ENCODE measurements at regions of chrX and their contacts with region 1.

Region 1: GRCh38 chrX:154051201-154051810 is 31.6 kb upstream of the IRAK1 start:
- DNase-seq: peak; percentile 82

Region 2: DNA sequence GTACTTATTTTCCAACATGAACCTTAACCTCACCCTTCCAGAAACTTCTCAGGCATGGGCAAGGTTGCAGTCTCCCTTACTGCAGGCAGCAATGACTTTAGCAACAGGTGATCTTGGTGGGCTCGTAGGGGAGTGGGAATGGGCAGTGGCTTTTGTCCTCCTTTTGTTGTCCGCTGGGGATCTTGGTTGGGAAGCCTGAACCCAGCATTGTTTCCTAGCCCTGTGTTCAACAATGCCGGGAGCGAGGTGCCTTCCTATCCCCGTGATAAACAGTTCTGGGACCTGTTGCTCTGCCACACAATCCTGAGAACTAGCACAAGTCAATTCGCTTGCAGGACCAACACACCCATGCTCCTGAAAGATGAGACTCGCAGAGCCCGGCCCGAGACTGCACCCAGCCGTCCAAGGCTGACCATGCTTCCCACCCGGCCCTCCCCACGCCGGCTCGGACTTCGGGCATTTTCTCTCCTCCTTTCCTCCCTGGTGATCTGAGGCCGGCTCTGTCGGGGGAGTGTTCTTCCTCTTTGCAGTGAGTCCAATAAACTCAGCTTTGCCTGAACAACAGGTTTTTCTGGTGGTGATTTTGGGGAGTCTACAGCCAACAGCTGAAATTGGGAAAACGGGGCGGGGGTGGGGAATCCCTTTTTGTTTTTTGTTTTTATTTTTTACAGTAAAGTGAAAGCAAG is 51.8 kb before region 1 on chrX:
- intact Hi-C with region 1: loop called in 1 of 2 experiments (anchors 10 kb)
- DNase-seq: no peak

Region 3: DNA sequence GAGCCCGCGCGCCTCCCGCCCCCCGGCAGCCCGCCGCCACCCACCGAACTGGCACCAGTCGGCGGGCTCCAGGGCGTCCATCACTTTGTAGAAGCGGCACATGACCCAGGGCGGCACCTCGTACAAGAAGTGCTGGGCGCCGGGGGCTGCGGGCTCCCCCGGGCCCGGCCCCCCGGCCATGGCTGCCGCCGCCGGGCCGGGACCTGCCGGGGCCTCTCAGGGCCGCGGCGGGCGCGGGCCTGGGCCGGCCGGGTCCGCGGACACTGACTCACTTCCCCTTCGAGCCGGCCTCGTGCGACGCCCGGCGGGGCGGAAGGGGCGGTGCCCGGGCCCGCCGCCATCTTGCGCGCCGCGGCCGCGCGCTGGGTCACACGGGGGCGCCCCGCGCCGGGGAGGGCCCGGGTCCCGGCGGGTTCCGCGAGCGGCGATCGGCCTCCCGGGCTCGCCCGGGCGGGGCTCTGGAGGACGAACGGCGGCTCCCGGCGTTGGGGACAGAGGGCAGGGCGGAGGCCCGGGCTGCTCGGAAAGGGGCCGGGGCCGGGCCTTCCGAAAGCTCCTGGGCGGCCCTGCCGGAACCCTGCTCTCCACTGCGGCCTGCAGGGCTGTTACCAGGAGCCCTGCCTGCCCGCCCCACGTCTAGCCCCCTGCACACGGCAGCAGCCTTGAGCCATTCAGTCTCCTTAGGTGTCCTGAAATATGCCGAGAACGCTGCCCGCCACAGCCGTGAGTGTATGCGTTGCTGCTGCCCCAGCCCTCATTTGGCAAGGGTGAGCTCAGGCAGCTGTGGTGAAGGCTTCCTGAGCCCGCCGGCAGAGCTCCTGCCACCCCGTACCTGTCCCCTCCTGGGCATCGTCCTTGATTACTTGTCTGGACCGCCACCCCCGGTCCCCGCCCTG is 31.4 kb before region 1 on chrX and contains the start of gene IRAK1:
- intact Hi-C with region 1: loop called in 1 of 2 experiments (anchors 5 kb)
- DNase-seq: no peak
- total RNA-seq, gene IRAK1: 88.2 to 114 TPM